Esophagus muscularis mucosa (tissue), 4 donors: ENCODE measurements at regions of chr6 and their contacts with region 1.

Region 1: GRCh38 chr6:87589693-87590549 is at the starts of genes ORC3 and RARS2:
- DNase-seq: peak; percentile 99
- H3K4me3 ChIP-seq: peak within 1 kb of the TSS; percentile 66 to 86 (median 78)
- H3K27ac ChIP-seq: peak within 1 kb of the TSS; percentile 76 to 89 (median 86)
- H3K4me1 ChIP-seq: peaks cover 29 to 67% (median 51%) of the 10 kb centered on the region in 4 donors
- H3K27me3 ChIP-seq: no peaks in the 10 kb centered on the region
- CTCF ChIP-seq: no peak
- EP300 ChIP-seq: no peak
- POLR2A ChIP-seq: peak; percentile 58
- total RNA-seq, gene ORC3: 9.9 to 18.7 (median 12.6) TPM
- total RNA-seq, gene RARS2: 14.1 to 19.9 (median 17.6) TPM

Region 2: GRCh38 chr6:87393022-87393622 is 196.8 kb before region 1 on chr6:
- intact Hi-C with region 1: loop called (anchors 5 kb)
- DNase-seq: no peak
- H3K4me3 ChIP-seq: no peak overlapping the region
- H3K27ac ChIP-seq: no peak overlapping the region
- H3K4me1 ChIP-seq: no peaks in the 10 kb centered on the region
- H3K27me3 ChIP-seq: no peaks in the 10 kb centered on the region
- CTCF ChIP-seq: peak; percentile 68 to 81 (median 75)
- EP300 ChIP-seq: no peak
- POLR2A ChIP-seq: no peak

Region 3: DNA sequence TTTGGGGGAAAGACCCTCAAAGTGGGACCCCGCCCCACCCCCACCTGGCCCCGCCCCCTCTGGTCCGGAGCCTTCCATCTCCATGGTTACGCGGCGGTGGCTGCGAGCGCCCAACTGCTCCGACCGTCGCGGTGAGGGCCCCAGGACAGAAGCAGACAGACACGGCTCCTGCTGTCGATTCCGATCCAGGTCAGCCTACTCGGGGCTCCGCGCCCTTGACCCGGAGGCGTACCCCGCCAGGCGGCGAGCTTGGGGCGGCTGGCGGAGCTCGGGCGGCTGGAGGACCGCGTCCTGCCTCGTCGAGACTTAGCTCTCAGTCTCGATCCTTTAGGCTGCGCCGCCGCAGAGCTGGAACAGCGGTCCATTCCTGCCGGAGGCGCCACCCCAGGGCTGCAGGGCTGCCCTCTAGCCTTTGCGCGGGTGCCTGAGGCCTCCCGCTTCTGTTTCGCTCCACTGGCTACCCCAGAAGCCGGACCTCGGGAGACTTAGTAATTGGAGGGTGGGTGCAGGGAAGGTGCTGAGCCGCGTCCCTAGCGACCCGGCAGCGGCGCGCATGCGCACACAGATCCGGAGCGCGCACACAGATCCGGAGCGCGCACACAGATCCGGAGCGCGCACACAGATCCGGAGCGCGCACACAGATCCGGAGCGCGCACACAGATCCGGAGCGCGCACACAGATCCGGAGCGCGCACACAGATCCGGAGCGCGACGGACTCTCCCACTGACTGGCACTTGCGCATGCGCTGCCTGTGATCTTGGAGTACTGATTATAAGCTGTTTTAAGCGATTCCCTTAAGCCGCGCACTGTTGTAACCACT is 181.8 kb before region 1 on chr6 and contains the start of gene CFAP206:
- intact Hi-C with region 1: loop called (anchors 5 kb)
- DNase-seq: no peak
- H3K4me3 ChIP-seq: peak within 1 kb of the TSS; percentile 72 to 89 (median 84)
- H3K27ac ChIP-seq: peak within 1 kb of the TSS; percentile 73 to 87 (median 82)
- H3K4me1 ChIP-seq: peaks cover 4 to 11% (median 7%) of the 10 kb centered on the region in 4 donors
- H3K27me3 ChIP-seq: no peaks in the 10 kb centered on the region
- CTCF ChIP-seq: no peak
- EP300 ChIP-seq: no peak
- POLR2A ChIP-seq: no peak
- total RNA-seq, gene CFAP206: 0.23 to 0.26 TPM in 2 of 4 donors, not detected in the others

Region 4: DNA sequence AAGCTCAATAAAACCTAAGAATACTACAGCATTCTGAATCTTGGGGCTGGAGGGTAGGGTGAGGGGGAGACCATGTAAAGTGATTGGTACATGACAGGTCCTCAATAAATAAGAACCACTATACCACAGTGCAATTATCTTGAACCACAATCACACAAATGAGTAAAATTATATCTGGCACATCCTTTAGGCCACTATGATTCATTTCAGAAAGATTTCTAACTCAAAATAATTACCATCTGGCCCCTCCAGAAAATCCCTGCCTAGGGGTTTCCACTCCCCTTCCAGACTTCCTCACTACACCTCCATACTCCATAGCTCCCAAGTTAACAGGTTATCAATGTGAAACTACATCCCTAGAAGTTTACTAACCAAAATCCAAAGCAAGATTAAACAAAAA is 92.4 kb after region 1 on chr6:
- intact Hi-C with region 1: loop called (anchors 10 kb)
- DNase-seq: no peak
- H3K4me3 ChIP-seq: no peak overlapping the region
- H3K27ac ChIP-seq: no peak overlapping the region
- H3K4me1 ChIP-seq: peaks cover 15 to 56% (median 39%) of the 10 kb centered on the region in 4 donors
- H3K27me3 ChIP-seq: no peaks in the 10 kb centered on the region
- CTCF ChIP-seq: no peak
- EP300 ChIP-seq: no peak
- POLR2A ChIP-seq: no peak

Region 5: GRCh38 chr6:87929843-87930288 is 339.9 kb after region 1 on chr6:
- intact Hi-C with region 1: no loop called
- DNase-seq: no peak
- H3K4me3 ChIP-seq: no peak overlapping the region
- H3K27ac ChIP-seq: no peak overlapping the region
- H3K4me1 ChIP-seq: peaks cover 4 to 9% (median 5%) of the 10 kb centered on the region in 4 donors
- H3K27me3 ChIP-seq: no peaks in the 10 kb centered on the region
- CTCF ChIP-seq: peak; percentile 69 to 84 (median 71)
- EP300 ChIP-seq: no peak
- POLR2A ChIP-seq: no peak